Activated CD8-positive, alpha-beta memory T cell treated with anti-CD3 and anti-CD28 coated beads, Interleukin-2, amount 10 ng/mL, durations not matched to agents 7 days and 5 days (primary cell): ENCODE measurements at regions of chr3 and their contacts with region 1.

Region 1: GRCh38 chr3:141000027-141000663 is 51.0 kb upstream of the SPSB4 start:
- DNase-seq: peak; percentile 70
- ATAC-seq: peak; percentile 89
- H3K4me3 Mint-ChIP-seq: no peak overlapping the region
- H3K27ac Mint-ChIP-seq: peak overlapping the region; percentile 8
- H3K4me1 Mint-ChIP-seq: peaks cover 6% of the 10 kb centered on the region
- H3K27me3 Mint-ChIP-seq: peaks cover 3% of the 10 kb centered on the region

Region 2: GRCh38 chr3:140974900-140975299 is 25.2 kb before region 1 on chr3:
- CTCF ChIA-PET with region 1: interaction called, 11 read pairs
- DNase-seq: no peak
- ATAC-seq: peak; percentile 27
- H3K4me3 Mint-ChIP-seq: no peak overlapping the region
- H3K27ac Mint-ChIP-seq: no peak overlapping the region
- H3K4me1 Mint-ChIP-seq: peaks cover 11% of the 10 kb centered on the region
- H3K27me3 Mint-ChIP-seq: no peaks in the 10 kb centered on the region

Region 3: GRCh38 chr3:141011232-141011996 is 11.3 kb after region 1 on chr3:
- CTCF ChIA-PET with region 1: interaction called, 39 read pairs
- DNase-seq: peak; percentile 88
- ATAC-seq: peak; percentile 91
- H3K4me3 Mint-ChIP-seq: no peak overlapping the region
- H3K27ac Mint-ChIP-seq: no peak overlapping the region
- H3K4me1 Mint-ChIP-seq: peaks cover 11% of the 10 kb centered on the region
- H3K27me3 Mint-ChIP-seq: peaks cover 63% of the 10 kb centered on the region

Region 4: GRCh38 chr3:141105828-141106628 is 105.9 kb after region 1 on chr3:
- CTCF ChIA-PET with region 1: interaction called, 23 read pairs
- DNase-seq: peak; percentile 77
- ATAC-seq: peak; percentile 53
- H3K4me3 Mint-ChIP-seq: no peak overlapping the region
- H3K27ac Mint-ChIP-seq: no peak overlapping the region
- H3K4me1 Mint-ChIP-seq: no peaks in the 10 kb centered on the region
- H3K27me3 Mint-ChIP-seq: peaks cover 10% of the 10 kb centered on the region

Region 5: GRCh38 chr3:141192345-141192744 is 192.2 kb after region 1 on chr3:
- CTCF ChIA-PET with region 1: interaction called, 54 read pairs
- DNase-seq: peak; percentile 97
- ATAC-seq: peak; percentile 100
- H3K4me3 Mint-ChIP-seq: no peak overlapping the region
- H3K27ac Mint-ChIP-seq: no peak overlapping the region
- H3K4me1 Mint-ChIP-seq: peaks cover 10% of the 10 kb centered on the region
- H3K27me3 Mint-ChIP-seq: peaks cover 26% of the 10 kb centered on the region